ENCODE measurements at regions of chr4 and their contacts with region 1.

Region 1: DNA sequence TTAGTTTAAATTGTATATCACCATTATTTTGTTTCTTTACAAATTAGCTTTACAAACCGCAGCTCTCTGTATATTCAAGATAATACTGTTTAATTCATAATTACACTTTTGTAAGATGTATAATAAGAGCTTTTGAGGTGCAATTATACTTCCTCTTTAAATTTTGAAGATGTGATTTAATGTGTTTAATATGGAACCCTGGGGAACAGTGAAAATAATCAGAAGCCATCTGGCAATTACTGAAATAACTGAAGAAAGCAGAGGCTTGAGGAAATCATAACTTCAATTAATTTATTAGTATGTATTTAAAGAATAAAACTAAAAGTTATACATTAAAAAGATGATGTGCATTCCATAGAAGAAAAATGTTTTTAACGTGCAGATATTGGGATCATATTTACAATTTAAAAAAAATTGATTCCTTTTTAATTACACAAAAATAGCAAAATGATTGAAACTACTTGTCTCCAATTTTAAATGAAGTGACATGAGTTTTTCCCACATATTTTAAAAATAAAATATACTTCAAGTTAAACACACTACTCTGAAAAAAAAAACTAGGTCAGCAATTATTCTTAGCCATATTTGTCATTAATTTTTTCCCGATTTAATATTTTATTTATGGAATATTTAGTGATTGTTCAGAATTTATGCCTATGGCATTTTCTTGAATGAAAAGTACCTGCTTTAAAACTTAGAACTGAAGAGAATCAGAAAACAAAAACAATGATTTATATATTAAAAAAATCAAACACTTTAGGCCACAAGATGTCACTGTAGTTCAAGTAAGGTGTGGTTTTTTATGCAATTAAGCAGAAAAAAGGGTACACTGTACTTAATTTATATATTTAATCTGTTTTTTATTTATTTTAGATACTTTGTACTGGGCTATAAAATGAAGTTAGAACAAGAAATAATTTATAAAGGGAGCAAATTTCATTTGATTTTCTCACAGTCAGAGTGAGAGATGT is 942.7 kb upstream of the NDST4 start:
- DNase-seq: no peak
- ATAC-seq: no peak
- H3K4me3 ChIP-seq: no peak overlapping the region
- H3K27ac ChIP-seq: no peak overlapping the region
- H3K4me1 ChIP-seq: no peaks in the 10 kb centered on the region
- H3K27me3 ChIP-seq: no peaks in the 10 kb centered on the region
- CTCF ChIP-seq: no peak
- EP300 ChIP-seq: no peak
- POLR2A ChIP-seq: no peak
- RAD21 ChIP-seq: no peak

Region 2: DNA sequence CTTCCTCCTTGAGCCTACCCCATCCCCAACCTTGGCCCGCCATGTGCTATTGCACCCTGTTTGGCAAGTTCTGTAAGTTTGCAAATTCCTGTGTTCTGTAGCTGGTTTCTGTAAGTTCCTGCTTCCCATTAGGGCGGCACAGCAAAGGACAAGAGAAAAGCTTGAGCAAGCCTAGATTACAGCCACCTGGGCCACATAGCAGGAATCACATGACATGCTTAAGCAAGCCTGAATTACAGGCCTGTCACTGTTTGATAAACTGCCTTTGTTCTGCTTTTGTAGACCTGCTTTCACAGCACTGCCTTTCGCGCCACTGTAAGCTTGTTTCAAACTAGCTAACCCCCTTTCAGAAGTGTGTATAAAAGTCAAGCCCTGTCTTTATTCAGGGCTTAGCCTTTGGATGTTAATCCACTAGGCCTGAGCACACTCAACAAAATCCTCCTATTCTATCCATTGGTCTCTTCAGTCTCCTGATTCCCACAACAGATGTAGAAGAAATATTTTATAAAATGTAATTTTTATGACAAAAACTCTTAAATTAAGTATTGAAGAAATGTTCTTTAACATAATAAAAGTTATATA is 35.9 kb before region 1 on chr4:
- CTCF ChIA-PET with region 1: no interaction called
- POLR2A ChIA-PET with region 1: no interaction called
- in situ Hi-C with region 1: no loop called
- intact Hi-C with region 1: no loop called
- DNase-seq: no peak
- ATAC-seq: no peak
- H3K4me3 ChIP-seq: no peak overlapping the region
- H3K27ac ChIP-seq: no peak overlapping the region
- H3K4me1 ChIP-seq: peaks cover 4% of the 10 kb centered on the region
- H3K27me3 ChIP-seq: no peaks in the 10 kb centered on the region
- CTCF ChIP-seq: no peak
- EP300 ChIP-seq: no peak
- POLR2A ChIP-seq: no peak
- RAD21 ChIP-seq: no peak

Region 3: GRCh38 chr4:116099596-116099995 is 43.5 kb after region 1 on chr4:
- CTCF ChIA-PET with region 1: no interaction called
- POLR2A ChIA-PET with region 1: no interaction called
- in situ Hi-C with region 1: no loop called
- intact Hi-C with region 1: no loop called
- DNase-seq: no peak
- ATAC-seq: no peak
- H3K4me3 ChIP-seq: no peak overlapping the region
- H3K27ac ChIP-seq: no peak overlapping the region
- H3K4me1 ChIP-seq: no peaks in the 10 kb centered on the region
- H3K27me3 ChIP-seq: no peaks in the 10 kb centered on the region
- CTCF ChIP-seq: no peak
- EP300 ChIP-seq: no peak
- POLR2A ChIP-seq: no peak
- RAD21 ChIP-seq: no peak

Region 4: GRCh38 chr4:116150152-116150551 is 94.0 kb after region 1 on chr4:
- CTCF ChIA-PET with region 1: no interaction called
- POLR2A ChIA-PET with region 1: no interaction called
- in situ Hi-C with region 1: no loop called
- intact Hi-C with region 1: loop called (anchors 1 kb)
- DNase-seq: no peak
- ATAC-seq: no peak
- H3K4me3 ChIP-seq: no peak overlapping the region
- H3K27ac ChIP-seq: no peak overlapping the region
- H3K4me1 ChIP-seq: no peaks in the 10 kb centered on the region
- H3K27me3 ChIP-seq: no peaks in the 10 kb centered on the region
- CTCF ChIP-seq: no peak
- EP300 ChIP-seq: no peak
- POLR2A ChIP-seq: no peak
- RAD21 ChIP-seq: no peak

Measured in HepG2 (cell line).